Gastrocnemius medialis (tissue), 4 donors: ENCODE measurements at regions of chr1 and their contacts with region 1.

Region 1: GRCh38 chr1:153352523-153352922 is 3.9 kb upstream of the PGLYRP4 start:
- DNase-seq: peak; percentile 38 to 61
- ATAC-seq: peak; percentile 74 to 81
- H3K4me3 ChIP-seq: no peak overlapping the region
- H3K27ac ChIP-seq: no peak overlapping the region
- H3K4me1 ChIP-seq: peaks cover 0 to 4% of the 10 kb centered on the region in 2 donors
- H3K27me3 ChIP-seq: peaks cover 7 to 24% (median 8%) of the 10 kb centered on the region in 3 donors
- CTCF ChIP-seq: peak; percentile 75 to 92 (median 83)
- POLR2A ChIP-seq: no peak

Region 2: DNA sequence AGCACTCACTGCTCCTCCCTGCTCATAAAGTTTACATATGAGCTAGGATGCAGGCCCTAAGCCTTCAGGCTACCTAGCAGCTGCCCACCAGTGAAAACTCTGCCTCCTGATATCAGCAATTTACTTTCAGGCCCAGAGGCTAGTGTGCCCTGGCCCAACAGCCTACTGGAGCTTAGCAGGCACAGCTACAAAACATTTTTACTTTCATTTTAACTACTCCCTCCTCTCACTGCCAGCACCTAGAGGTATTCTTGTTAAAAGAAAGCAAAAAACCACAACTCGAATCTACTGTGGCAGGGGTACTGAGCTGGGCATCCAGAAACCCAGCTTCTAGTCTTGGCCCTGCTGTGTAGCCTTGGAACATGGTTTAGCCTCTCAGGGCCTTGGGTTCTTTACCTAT is 98.8 kb before region 1 on chr1:
- in situ Hi-C with region 1: no loop called
- intact Hi-C with region 1: no loop called
- DNase-seq: no peak
- ATAC-seq: no peak
- H3K4me3 ChIP-seq: no peak overlapping the region
- H3K27ac ChIP-seq: no peak overlapping the region
- H3K4me1 ChIP-seq: no peaks in the 10 kb centered on the region
- H3K27me3 ChIP-seq: peaks cover 0 to 3% (median 0%) of the 10 kb centered on the region in 3 donors
- CTCF ChIP-seq: no peak
- POLR2A ChIP-seq: no peak

Region 3: DNA sequence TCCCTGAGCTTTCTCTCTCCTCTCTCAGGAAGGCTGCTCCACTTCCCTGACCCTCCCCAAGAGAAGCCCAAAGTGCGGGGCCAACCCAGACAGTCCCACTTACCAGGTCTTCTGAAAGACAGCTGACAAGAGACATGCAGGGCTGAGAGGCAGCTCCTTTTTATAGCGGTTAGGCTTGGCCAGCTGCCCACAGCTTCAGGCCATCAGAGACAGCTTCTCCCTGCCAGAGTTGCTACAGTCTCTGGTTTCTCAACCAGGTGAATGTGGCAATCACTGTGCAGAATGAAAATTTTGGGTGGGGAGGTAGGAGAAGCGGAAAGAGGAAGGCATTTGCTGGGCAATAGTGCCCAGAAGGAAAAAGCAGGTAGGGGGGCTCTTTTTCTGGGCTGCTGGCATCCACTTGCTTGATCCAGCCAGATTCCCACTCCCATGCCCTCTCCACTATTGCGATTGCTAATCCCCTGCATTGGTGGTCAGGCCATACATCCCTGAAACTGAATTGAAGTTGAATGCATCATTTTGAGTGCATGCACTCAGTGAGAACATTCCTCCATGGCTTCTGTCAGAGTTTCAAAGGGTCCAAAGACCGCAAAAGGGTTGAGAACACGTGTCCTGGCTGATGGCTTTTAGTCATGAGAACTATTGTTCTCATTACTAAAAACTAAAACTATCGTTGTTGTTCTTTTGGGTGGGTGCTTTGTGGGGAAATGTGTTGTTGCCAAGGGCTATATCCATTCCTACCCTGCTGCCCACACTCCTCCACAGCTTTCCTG is 38.6 kb after region 1 on chr1 and contains the start of gene S100A8:
- in situ Hi-C with region 1: no loop called
- intact Hi-C with region 1: loop called (anchors 5 kb)
- DNase-seq: peak; percentile 83 to 90
- ATAC-seq: peak; percentile 89
- H3K4me3 ChIP-seq: peak within 1 kb of the TSS in 1 of 4 donors; percentile 8
- H3K27ac ChIP-seq: peak within 1 kb of the TSS in 3 of 4 donors; percentile 44 to 66 (median 63)
- H3K4me1 ChIP-seq: peaks cover 13 to 40% of the 10 kb centered on the region in 2 donors
- H3K27me3 ChIP-seq: no peaks in the 10 kb centered on the region
- CTCF ChIP-seq: no peak
- POLR2A ChIP-seq: peak; percentile 10 to 35
- total RNA-seq, gene S100A8: 4.2 to 41.6 (median 12.5) TPM

Region 4: GRCh38 chr1:153494976-153495535 is 142.5 kb after region 1 on chr1:
- in situ Hi-C with region 1: loop called (anchors 5 to 10 kb)
- intact Hi-C with region 1: loop called (anchors 1 kb)
- DNase-seq: peak; percentile 35 to 67
- ATAC-seq: no peak
- H3K4me3 ChIP-seq: no peak overlapping the region
- H3K27ac ChIP-seq: no peak overlapping the region
- H3K4me1 ChIP-seq: peaks cover 13 to 14% of the 10 kb centered on the region in 2 donors
- H3K27me3 ChIP-seq: no peaks in the 10 kb centered on the region
- CTCF ChIP-seq: peak; percentile 91 to 97 (median 94)
- POLR2A ChIP-seq: no peak

Region 5: DNA sequence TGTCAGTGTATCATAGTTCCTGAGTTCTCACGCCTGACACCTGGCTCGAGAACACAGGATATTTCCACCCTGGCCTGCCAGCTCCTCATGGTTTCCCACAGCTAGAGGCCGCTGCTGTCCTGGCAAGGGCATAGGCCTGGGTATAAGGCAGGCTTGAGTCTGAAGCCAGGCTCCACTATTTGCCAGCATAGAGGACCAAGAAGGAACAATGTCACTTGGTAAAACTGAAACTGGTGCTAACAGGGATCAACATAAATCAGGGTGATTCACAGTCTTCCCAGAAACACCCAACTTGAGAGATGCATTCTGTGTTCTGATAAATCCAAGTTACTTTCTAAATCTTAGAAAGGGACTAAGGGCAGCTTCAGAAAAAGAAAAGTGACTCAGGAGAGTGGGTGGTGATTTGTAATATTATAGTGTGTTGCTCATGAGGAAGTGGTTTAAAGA is 220.1 kb after region 1 on chr1:
- in situ Hi-C with region 1: no loop called
- intact Hi-C with region 1: loop called (anchors 10 kb)
- DNase-seq: peak; percentile 80 to 88
- ATAC-seq: peak; percentile 83 to 86
- H3K4me3 ChIP-seq: no peak overlapping the region
- H3K27ac ChIP-seq: peak overlapping the region; percentile 59 to 77 (median 67)
- H3K4me1 ChIP-seq: peaks cover 14 to 27% of the 10 kb centered on the region in 2 donors
- H3K27me3 ChIP-seq: no peaks in the 10 kb centered on the region
- CTCF ChIP-seq: peak; percentile 78 to 90 (median 84)
- POLR2A ChIP-seq: no peak

Region 6: GRCh38 chr1:153727463-153728304 is 375.2 kb after region 1 on chr1 and contains the start of gene INTS3:
- in situ Hi-C with region 1: loop called in 1 of 4 experiments (anchors 25 kb)
- intact Hi-C with region 1: no loop called
- DNase-seq: peak; percentile 100
- ATAC-seq: peak; percentile 99 to 100
- H3K4me3 ChIP-seq: peak within 1 kb of the TSS; percentile 77 to 96 (median 88)
- H3K27ac ChIP-seq: peak within 1 kb of the TSS; percentile 95 to 100 (median 98)
- H3K4me1 ChIP-seq: peaks cover 20 to 24% of the 10 kb centered on the region in 2 donors
- H3K27me3 ChIP-seq: no peaks in the 10 kb centered on the region
- CTCF ChIP-seq: peak in 2 of 5 experiments; percentile 12 to 32
- POLR2A ChIP-seq: peak; percentile 42 to 52
- total RNA-seq, gene INTS3: 16.1 to 28.0 (median 19.9) TPM

Region 7: DNA sequence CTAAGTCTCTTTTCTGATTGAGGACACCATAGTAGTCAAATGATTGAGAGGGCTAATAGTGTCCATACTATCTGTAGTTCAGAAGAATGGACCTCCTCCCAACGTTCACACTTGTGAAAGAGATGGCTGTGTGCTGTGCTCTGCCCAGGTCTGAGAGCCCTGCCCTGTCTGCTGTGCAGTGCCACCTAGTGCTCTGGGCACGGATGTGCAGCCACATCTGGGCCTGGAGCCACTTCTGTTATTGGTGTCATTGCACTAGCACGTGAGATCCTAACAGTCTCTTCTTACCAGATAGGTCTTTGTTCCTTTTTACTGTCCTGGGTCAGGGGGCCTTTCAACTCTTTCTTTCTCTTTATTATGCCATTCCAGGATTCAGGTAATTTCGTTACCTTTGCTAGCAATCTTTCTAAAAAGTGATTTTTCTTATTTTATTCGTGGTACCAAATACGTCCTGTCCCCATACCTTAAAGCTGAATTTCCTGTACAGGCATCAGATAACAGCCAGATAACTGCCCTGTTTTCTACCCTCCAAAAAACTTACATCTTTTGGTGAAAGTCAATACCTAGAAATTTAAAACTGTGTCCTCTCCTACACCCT is 397.0 kb after region 1 on chr1:
- in situ Hi-C with region 1: loop called in 1 of 4 experiments (anchors 25 kb)
- intact Hi-C with region 1: loop called (anchors 10 kb)
- DNase-seq: peak; percentile 88 to 93
- ATAC-seq: peak; percentile 78 to 88
- H3K4me3 ChIP-seq: no peak overlapping the region
- H3K27ac ChIP-seq: peak overlapping the region; percentile 68 to 95 (median 83)
- H3K4me1 ChIP-seq: peaks cover 36 to 51% of the 10 kb centered on the region in 2 donors
- H3K27me3 ChIP-seq: no peaks in the 10 kb centered on the region
- CTCF ChIP-seq: peak; percentile 88 to 95 (median 91)
- POLR2A ChIP-seq: peak in 1 of 2 donors; percentile 38

Region 8: DNA sequence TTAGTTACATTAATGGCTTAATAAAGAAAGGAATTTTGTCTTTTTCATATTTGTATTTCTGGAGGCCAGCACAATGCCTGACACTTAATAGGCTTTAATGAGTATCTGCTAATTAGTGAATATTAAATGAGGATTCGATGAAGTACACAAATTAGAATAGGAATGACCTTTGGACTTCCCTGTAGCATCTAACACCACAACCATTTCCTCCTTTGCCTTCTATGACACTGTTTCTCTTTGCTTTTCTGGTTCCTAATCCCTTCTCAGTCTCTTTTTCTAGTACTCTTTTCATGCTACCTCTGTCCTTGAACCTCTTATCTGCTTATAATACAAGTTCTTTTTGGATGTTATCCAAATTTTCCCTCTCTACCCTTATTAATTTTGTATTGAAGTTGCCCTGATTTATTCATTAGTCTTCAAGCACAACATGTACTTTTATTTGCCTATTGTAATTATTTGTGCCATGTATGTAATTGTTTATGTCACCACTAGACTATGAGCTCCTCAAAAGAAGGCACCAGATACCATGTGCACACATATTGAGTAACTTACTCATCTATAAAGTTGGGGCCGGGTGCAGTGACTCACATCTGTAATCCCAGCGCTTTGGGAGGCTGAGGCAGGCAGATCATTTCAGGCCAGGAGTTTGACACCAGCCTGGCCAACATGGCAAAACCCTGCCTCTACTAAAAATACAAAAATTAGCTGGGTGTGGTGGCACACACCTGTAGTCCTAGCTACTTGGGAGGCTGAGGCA is 661.8 kb after region 1 on chr1:
- in situ Hi-C with region 1: loop called in 1 of 4 experiments (anchors 25 kb)
- intact Hi-C with region 1: no loop called
- DNase-seq: no peak
- ATAC-seq: no peak
- H3K4me3 ChIP-seq: no peak overlapping the region
- H3K27ac ChIP-seq: no peak overlapping the region
- H3K4me1 ChIP-seq: no peaks in the 10 kb centered on the region
- H3K27me3 ChIP-seq: no peaks in the 10 kb centered on the region
- CTCF ChIP-seq: no peak
- POLR2A ChIP-seq: no peak